HEK293T (cell line): ENCODE measurements at regions of chr5 and their contacts with region 1.

Region 1: DNA sequence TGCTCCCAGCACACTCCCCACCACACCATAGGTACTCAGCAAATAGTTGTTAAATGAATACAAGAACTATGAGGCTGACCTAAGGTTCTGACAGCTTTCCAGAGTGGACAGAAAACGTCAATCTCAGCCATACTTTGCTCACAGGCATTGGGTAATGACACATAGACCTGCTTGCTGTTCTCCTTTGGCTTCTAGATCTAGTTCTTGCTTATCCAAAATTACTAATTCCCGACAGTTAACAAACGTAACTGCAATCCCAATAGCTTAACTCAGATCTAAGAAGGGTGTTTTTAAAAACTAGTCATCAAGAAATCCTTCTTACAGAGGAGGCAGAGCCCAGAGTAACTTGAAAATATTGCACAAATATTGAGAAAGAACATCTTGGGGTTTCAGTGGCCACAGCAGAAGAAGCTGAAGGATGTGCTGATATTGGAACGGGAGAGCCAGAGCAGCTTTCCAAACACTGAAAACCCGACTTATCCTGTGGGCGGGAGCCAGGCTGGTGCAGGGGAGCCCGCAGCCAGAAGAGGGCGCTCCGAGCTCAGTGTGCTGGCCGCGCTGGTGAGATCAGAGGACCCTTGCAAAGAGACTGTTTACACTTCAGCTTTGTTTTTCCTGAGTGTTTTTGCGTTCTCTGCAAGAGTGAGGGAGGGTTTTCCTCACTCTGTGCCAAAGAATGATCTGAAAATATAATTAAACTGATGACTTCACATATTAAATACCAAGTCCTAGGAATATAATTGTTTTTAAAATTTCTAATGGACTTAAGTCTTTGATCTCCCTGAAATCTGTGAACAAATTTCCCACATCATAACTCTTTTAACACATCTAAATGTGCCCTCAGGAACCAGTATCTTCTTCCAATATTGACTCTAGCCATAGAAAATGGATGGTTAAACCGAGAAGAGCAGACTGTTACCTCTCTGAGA is 30.3 kb downstream of the FGF1 start:
- DNase-seq: peak; percentile 89

Region 2: DNA sequence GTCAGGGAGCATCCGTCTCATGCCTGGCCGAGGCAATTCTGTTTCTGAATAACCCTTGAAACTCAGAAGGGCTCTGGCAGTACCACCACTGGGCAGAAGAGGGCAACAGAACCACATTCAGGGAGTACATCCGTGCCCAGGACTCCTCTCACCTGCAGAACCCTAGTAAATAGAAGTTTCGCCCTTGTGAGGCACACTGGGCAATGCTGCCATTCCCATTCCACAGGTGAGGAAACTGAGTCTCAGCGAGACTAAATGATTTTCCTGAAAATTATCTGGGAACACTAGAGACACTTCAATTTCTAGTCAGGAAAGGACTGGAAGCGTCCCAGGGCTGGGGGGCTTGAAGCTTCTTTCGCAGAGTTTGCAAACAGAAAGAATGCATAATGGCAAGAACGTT is 44.4 kb before region 1 on chr5:
- CTCF ChIA-PET with region 1: interaction called, 18 read pairs
- POLR2A ChIA-PET with region 1: no interaction called
- DNase-seq: peak; percentile 75

Region 3: GRCh38 chr5:142644640-142645361 is 10.8 kb before region 1 on chr5:
- CTCF ChIA-PET with region 1: interaction called, 37 read pairs
- POLR2A ChIA-PET with region 1: no interaction called
- DNase-seq: peak; percentile 32

Region 4: GRCh38 chr5:142671801-142672200 is 16.2 kb after region 1 on chr5:
- CTCF ChIA-PET with region 1: interaction called, 12 read pairs
- POLR2A ChIA-PET with region 1: interaction called, 6 read pairs
- DNase-seq: no peak

Region 5: DNA sequence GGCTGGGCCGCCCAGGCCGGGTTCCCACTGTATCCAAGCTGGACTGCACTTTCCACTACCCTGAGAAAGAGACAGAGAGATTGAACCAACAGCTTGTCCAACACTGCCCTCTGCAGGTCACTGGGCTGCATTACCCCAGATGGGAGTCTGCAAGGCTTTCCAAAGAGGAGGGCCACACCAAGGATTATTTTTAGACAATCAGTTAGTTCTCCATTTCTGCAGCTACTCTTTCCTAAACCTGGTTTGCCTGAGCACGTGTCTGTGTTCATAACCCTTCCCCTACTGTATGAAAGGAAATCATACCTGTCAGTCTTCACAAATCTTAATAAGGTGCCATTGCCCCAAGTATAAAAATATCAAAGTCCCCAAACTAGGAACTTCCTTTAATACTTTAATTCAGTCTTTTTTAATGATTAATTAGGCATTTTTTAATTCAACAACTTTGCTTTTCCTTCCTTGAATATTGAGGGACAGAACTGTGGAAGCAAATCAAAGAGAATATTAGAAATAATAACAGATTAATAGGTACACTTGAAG is 43.6 kb after region 1 on chr5:
- CTCF ChIA-PET with region 1: interaction called, 57 read pairs
- POLR2A ChIA-PET with region 1: no interaction called
- DNase-seq: peak; percentile 84

Region 6: GRCh38 chr5:142821733-142822487 is 166.3 kb after region 1 on chr5:
- CTCF ChIA-PET with region 1: no interaction called
- POLR2A ChIA-PET with region 1: no interaction called
- DNase-seq: no peak